Prostate gland (tissue), 2 donors: ENCODE measurements at regions of chr6 and their contacts with region 1.

Region 1: GRCh38 chr6:166275714-166276166 is 32.5 kb downstream of the PRR18 start:
- DNase-seq: peak; percentile 33
- H3K4me3 ChIP-seq: no peak overlapping the region
- H3K27ac ChIP-seq: no peak overlapping the region
- H3K4me1 ChIP-seq: no peaks in the 10 kb centered on the region
- H3K27me3 ChIP-seq: no peaks in the 10 kb centered on the region
- CTCF ChIP-seq: peak; percentile 77 to 95 (median 92)
- POLR2A ChIP-seq: no peak

Region 2: DNA sequence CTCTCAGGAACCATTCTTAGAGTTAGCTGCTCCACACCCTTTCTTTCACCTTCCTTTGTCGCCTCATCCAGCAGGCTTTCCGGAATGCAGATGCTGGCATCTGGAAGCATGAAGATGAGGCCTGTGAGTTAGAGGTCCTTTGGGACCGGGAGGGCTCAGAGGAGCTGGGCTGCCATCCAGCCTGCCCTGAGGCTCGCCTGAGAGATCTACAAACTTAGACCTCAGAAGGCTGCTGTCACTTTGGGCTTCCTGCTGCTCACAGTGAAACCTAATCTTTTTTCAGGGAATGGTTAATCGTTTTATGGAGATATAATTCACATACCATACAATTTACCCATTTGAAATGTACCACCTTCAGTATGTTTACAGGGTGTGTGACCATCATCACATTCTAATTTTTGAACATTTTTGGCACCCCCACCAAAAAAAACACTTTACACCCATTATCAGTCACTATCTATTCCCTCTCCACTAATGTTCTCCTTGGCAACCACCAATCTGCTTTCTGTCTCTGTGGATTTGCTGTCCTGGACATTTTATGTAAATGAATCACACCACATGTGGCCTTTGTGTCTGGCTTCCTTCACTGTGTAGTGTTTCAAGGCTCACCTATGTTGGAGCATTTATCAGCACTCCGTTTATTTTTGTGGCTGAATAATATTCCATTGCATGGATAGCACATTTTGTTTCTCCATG is 127.0 kb after region 1 on chr6:
- intact Hi-C with region 1: loop called (anchors 2 kb)
- DNase-seq: no peak
- H3K4me3 ChIP-seq: no peak overlapping the region
- H3K27ac ChIP-seq: no peak overlapping the region
- H3K4me1 ChIP-seq: no peaks in the 10 kb centered on the region
- H3K27me3 ChIP-seq: no peaks in the 10 kb centered on the region
- CTCF ChIP-seq: no peak
- POLR2A ChIP-seq: no peak

Region 3: GRCh38 chr6:167113935-167114910 is 838.5 kb after region 1 on chr6:
- intact Hi-C with region 1: no loop called
- DNase-seq: no peak
- H3K4me3 ChIP-seq: no peak overlapping the region
- H3K27ac ChIP-seq: no peak overlapping the region
- H3K4me1 ChIP-seq: no peaks in the 10 kb centered on the region
- H3K27me3 ChIP-seq: no peaks in the 10 kb centered on the region
- CTCF ChIP-seq: no peak
- POLR2A ChIP-seq: no peak